ENCODE measurements at regions of chr2 and their contacts with region 1.

Region 1: GRCh38 chr2:101580528-101580927 is 105.6 kb upstream of the RFX8 start:
- DNase-seq: no peak
- H3K4me3 ChIP-seq: no peak overlapping the region
- H3K27ac ChIP-seq: no peak overlapping the region
- H3K4me1 ChIP-seq: peaks cover 0 to 9% (median 3%) of the 10 kb centered on the region in 4 donors
- H3K27me3 ChIP-seq: no peaks in the 10 kb centered on the region
- CTCF ChIP-seq: no peak
- EP300 ChIP-seq: no peak
- POLR2A ChIP-seq: no peak

Region 2: DNA sequence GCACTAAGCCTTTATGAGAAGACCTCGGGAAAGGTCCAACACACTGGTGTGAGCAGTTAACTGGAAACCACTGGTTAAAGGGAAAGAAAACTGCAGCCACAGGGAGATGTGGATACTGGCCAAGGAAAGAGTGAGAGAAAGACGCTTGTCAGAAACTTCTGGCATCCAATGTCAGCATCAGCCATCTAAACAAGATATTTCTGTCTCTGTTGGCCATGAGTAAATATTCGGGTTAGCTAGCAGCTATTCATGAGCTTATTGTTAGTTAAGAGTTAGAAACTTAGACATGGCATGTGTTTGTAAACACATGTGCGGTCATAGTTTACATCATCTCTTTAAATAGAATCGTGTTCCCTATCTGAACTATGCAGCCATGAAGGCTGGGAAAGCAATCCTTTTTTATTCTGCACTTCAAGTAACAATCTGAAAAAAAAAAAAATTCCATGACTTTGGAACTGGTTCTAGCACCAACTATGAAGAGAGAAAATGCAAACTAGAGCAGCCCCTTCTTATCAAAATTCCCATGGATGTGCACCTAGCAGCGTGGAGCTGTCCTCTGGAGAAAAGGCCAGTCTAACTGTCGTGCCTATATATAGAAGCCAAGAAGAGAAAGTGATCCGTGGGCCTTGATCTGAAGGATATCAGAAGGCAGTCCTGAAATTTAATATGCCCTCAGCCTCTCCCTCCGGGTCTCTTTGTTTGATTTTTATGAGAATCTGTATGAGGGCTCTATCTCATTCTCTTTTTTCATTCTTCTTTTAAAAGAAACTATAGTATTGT is 21.6 kb before region 1 on chr2:
- intact Hi-C with region 1: loop called (anchors 1 kb)
- DNase-seq: no peak
- H3K4me3 ChIP-seq: peak overlapping the region in 3 of 4 donors; percentile 7 to 16 (median 9)
- H3K27ac ChIP-seq: peak overlapping the region; percentile 55 to 77 (median 74)
- H3K4me1 ChIP-seq: peaks cover 11 to 23% (median 21%) of the 10 kb centered on the region in 4 donors
- H3K27me3 ChIP-seq: no peaks in the 10 kb centered on the region
- CTCF ChIP-seq: no peak
- EP300 ChIP-seq: no peak
- POLR2A ChIP-seq: no peak

Measured in esophagus muscularis mucosa (tissue), 4 donors.